ENCODE measurements at regions of chr9 and their contacts with region 1.

Region 1: GRCh38 chr9:83980395-83981125 is at the start of gene RMI1:
- DNase-seq: peak; percentile 99
- H3K4me3 Mint-ChIP-seq: peak within 1 kb of the TSS; percentile 94
- H3K27ac Mint-ChIP-seq: peak within 1 kb of the TSS; percentile 98
- H3K4me1 Mint-ChIP-seq: peaks cover 32% of the 10 kb centered on the region
- H3K27me3 Mint-ChIP-seq: no peaks in the 10 kb centered on the region
- total RNA-seq, gene RMI1: 28.9 and 29.3 TPM in 2 replicates

Region 2: GRCh38 chr9:83649080-83649479 is 331.5 kb before region 1 on chr9:
- intact Hi-C with region 1: no loop called
- DNase-seq: peak; percentile 91
- H3K4me3 Mint-ChIP-seq: no peak overlapping the region
- H3K27ac Mint-ChIP-seq: no peak overlapping the region
- H3K4me1 Mint-ChIP-seq: peaks cover 3% of the 10 kb centered on the region
- H3K27me3 Mint-ChIP-seq: no peaks in the 10 kb centered on the region

Region 3: DNA sequence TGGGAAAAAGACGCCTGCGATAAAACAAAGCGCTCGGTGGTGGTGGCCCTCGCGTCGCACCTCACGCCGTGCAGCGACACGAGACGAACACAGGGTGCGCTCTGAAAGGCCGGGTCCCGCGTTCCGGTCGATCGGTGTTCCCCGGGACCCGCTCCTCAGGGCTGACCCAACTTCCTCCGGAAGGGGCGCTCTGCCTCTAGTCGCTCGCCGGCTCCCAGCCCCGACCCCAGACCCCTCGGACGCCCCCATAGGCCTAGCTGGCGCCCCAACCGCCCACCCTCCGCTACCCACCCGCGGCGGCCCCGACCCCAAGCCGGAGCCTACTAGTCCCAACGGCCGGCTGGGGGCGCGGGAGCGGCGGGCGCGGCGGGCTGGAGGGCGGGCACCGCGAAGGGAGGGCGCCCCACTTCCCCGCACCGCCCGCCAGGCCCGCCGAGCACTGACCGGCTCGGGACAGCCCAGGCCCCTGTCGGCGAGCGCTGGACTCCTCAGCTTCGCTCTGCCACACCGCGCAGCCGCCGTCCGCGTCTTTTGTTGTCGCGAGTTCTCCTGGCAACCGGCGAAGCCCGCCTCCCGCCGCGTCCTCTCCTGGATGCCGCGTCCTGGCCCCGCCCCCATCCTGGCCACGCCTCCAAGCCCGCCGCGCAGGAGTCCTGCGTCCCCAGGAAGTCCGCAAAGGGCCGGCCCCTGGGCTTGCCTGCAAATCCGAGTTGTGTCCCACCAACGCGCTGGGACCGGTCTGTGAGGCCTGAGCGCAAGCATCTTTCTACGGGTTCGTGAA is 59.4 kb before region 1 on chr9 and contains the start of gene KIF27:
- intact Hi-C with region 1: loop called (anchors 1 kb)
- DNase-seq: peak; percentile 100
- H3K4me3 Mint-ChIP-seq: peak within 1 kb of the TSS; percentile 87
- H3K27ac Mint-ChIP-seq: peak within 1 kb of the TSS; percentile 93
- H3K4me1 Mint-ChIP-seq: peaks cover 11% of the 10 kb centered on the region
- H3K27me3 Mint-ChIP-seq: no peaks in the 10 kb centered on the region
- total RNA-seq, gene KIF27: 2.4 and 2.7 TPM in 2 replicates

Region 4: DNA sequence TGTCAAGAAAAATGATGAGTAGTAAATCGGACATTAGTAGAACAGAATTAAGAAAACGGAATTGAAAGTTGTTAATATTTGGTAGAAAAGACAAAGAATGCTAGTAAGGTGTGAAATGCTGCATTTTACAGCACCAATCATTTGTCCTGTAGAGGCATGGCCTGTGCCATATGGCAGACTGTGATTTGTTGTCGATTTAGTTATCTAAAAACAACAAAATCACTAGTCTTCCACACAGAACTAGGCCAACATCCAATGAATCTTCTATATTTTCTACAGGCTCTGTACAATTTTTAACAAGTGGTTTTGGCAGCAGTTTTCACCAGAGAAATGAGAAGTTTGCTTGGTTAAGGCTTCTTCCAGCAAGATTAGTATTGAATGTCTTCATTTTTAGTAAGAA is 11.0 kb before region 1 on chr9:
- intact Hi-C with region 1: loop called (anchors 1 kb)
- DNase-seq: no peak
- H3K4me3 Mint-ChIP-seq: no peak overlapping the region
- H3K27ac Mint-ChIP-seq: no peak overlapping the region
- H3K4me1 Mint-ChIP-seq: peaks cover 32% of the 10 kb centered on the region
- H3K27me3 Mint-ChIP-seq: no peaks in the 10 kb centered on the region

Region 5: DNA sequence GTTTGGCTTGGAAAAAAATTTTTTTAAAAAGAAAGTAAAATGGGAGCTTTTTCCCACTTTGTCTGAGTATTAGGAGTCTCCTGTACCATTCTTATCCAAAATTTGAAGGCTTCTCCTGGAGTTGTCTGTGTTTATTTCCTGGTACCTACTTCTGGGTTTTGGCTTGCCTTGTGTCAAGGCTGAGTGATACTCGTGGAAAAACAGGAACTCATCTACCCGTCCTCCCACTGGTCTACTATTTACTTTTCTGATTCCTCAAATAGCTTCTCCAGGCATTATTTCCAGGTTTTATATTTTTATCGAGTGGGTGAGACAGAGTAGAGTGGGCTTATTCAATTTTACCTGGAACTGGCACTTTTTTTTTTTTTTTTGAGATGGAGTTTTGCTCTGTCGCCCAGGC is 99.4 kb after region 1 on chr9:
- intact Hi-C with region 1: no loop called
- DNase-seq: no peak
- H3K4me3 Mint-ChIP-seq: no peak overlapping the region
- H3K27ac Mint-ChIP-seq: no peak overlapping the region
- H3K4me1 Mint-ChIP-seq: no peaks in the 10 kb centered on the region
- H3K27me3 Mint-ChIP-seq: peaks cover 25% of the 10 kb centered on the region

Region 6: DNA sequence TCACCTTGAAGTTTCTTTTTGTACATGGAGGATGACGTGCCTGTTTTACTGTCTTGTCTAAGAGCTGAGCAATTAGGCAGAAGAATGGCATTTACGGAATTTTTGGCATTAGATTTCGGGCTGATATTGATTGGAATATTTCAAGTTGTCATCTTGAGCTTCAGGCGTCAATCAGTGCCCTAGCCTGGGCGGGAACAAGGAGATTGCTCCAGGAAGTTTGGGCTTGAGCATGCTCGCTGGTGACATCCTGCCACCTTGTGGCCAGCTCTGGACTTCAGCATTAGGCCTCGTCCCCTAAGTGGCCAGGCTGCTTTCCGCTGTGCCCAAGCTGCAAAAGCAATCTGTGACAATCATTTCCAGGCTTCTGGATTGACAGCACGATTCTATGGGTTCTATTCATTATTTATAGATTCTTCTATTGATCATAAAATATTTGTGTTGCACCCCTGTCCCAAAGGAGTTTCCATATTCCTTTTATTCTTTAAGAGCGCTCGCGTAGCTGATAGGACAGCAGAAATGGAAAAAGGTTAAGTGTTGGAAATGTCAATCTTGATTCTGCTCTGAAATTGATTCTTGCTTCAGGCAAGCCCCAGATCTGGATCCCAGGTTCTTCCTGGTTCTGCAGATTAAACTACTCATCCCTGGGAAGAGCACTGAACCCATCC is 280.7 kb after region 1 on chr9:
- intact Hi-C with region 1: loop called (anchors 2 kb)
- DNase-seq: peak; percentile 86
- H3K4me3 Mint-ChIP-seq: peak overlapping the region; percentile 44
- H3K27ac Mint-ChIP-seq: no peak overlapping the region
- H3K4me1 Mint-ChIP-seq: peaks cover 9% of the 10 kb centered on the region
- H3K27me3 Mint-ChIP-seq: peaks cover 14% of the 10 kb centered on the region

Region 7: DNA sequence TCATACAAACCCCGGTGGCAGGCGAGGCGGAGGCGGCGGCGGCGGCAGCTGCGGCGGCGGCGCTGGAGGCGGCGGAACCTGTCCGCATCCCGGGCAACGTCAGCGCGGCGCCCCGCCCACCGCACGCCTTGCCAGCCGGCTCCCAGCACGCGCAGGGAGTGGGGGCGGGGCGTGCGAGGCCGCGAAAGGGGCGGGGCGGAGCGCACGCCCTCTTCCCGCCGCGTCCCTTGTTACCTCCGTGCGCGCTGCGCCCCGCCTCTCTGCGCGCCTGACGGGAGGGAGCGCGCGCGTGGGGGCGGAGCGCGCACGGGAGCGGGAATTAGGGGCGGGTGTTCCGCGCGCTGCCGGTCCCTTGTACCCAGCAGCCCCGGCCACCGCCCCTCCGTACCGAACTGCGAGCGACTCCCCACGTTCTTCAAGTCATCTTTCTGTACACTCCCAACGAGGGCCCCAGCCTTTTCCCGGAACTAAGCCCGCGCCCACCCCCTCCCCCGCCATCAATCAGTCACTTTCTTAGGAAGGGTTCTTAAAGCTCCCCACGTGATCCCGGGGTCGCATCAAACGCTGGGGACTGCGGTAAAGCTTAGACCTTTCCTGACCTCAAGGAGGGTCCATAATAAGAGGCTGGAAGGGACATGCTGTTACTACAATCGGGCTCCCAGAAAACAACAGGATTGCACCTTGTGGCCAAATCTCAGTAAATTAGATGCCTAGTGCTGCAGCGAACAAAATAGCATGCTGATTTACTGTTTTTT is 1761.5 kb after region 1 on chr9 and contains the start of gene AGTPBP1:
- intact Hi-C with region 1: loop called (anchors 10 kb)
- DNase-seq: peak; percentile 99
- H3K4me3 Mint-ChIP-seq: peak within 1 kb of the TSS; percentile 88
- H3K27ac Mint-ChIP-seq: peak within 1 kb of the TSS; percentile 94
- H3K4me1 Mint-ChIP-seq: peaks cover 25% of the 10 kb centered on the region
- H3K27me3 Mint-ChIP-seq: peaks cover 8% of the 10 kb centered on the region
- total RNA-seq, gene AGTPBP1: 25.8 and 27.8 TPM in 2 replicates

Measured in activated CD4-positive, alpha-beta T cell treated with anti-CD3 and anti-CD28 coated beads, Interleukin-2, amount 10 ng/mL, durations not matched to agents 24 days and 14 days (primary cell).